ENCODE measurements at regions of chr3 and their contacts with region 1.

Region 1: GRCh38 chr3:99023590-99024192 is 122.2 kb upstream of the DCBLD2 start:
- DNase-seq: peak in 1 of 3 donors; percentile 10
- ATAC-seq: no peak
- H3K4me3 ChIP-seq: no peak overlapping the region
- H3K4me1 ChIP-seq: no peaks in the 10 kb centered on the region
- CTCF ChIP-seq: peak; percentile 21

Region 2: GRCh38 chr3:99172736-99173657 is 149.3 kb after region 1 on chr3:
- intact Hi-C with region 1: loop called in 1 of 2 experiments (anchors 10 kb)
- DNase-seq: peak in 1 of 3 donors; percentile 77
- ATAC-seq: peak; percentile 75
- H3K4me3 ChIP-seq: no peak overlapping the region
- H3K4me1 ChIP-seq: no peaks in the 10 kb centered on the region
- CTCF ChIP-seq: peak; percentile 40

Region 3: DNA sequence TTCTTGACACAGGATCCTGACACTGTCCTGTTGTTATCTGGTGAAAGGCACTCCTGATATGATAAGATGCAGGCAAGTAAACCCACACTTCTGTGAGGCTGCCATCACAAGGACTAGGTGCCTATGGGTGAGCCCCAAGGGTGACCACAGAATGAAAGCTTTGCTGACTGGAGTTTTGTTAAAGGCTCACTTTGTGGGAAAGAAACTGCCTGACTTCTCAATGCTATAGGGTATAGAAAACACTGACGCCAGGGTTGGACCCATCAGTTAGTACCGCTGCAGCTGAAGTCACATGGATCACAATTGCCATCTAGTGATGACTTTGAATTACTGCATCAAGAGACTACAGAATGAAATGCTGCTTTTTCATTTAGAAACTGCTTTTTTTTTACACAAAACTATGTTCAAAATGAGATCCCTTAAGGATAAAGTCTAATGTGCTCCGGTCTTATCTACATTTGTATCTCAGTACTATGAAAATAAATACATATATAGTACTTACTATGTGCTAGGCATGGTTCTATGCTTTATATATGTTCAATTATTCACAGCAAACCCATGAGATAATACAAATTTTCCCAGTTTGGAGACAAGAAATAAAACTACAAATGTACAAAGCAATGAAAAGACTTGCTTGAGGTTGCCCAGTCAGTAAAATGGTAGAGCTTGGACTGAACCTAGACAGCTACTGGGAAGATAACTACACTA is 729.7 kb after region 1 on chr3:
- intact Hi-C with region 1: loop called in 1 of 2 experiments (anchors 5 kb)
- DNase-seq: peak in 1 of 3 donors; percentile 23
- ATAC-seq: peak; percentile 62
- H3K4me3 ChIP-seq: no peak overlapping the region
- H3K4me1 ChIP-seq: no peaks in the 10 kb centered on the region
- CTCF ChIP-seq: no peak